B cell (primary cell): ENCODE measurements at regions of chrX and their contacts with region 1.

Region 1: DNA sequence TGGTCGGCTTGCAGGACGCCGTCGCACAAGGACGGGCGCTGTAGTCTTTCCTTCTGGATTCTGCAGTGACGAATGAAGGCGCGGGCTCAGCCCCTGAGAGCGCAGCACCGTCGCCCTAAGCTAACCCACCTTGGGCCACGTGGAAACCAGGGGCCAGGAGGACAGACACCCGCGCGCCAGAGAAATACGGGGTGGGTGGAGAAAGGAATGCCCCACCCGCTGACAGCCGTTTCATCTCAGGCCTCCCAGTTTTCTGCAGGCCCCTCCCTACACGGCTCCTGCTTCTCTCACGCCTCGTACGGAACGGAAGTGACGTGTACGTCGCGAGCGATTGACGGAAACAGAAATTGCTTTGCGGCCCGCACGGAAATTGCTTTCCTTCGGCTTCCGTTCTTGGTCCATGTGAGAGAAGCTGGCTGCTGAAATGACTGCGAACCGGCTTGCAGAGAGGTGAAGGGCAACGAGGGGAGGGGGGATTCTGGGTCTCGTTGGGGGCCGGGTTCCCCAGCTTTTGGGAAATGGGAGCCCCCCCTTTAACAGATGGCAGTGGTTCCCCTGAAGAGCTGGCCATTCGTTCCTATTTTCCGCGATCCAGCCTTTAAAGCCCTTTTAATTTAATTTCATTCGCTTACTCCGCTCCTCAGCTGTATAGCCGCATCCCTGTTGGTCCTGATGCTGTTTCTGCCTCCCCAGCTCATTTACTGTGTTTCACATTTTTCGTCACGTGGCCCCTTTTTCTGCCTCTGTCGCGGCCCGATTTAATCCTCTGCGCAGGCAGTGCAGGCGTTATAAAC is at the start of gene UTP14A:
- DNase-seq: peak; percentile 87
- ATAC-seq: peak; percentile 95
- H3K4me3 ChIP-seq: peak within 1 kb of the TSS; percentile 66 to 81 (median 76)
- H3K4me3 Mint-ChIP-seq: peak within 1 kb of the TSS; percentile 94
- H3K27ac ChIP-seq: peak within 1 kb of the TSS; percentile 53 to 69
- H3K27ac Mint-ChIP-seq: peak within 1 kb of the TSS; percentile 93
- H3K4me1 ChIP-seq: peaks cover 4 to 12% of the 10 kb centered on the region in 2 donors
- H3K4me1 Mint-ChIP-seq: peaks cover 9% of the 10 kb centered on the region
- H3K27me3 ChIP-seq: no peaks in the 10 kb centered on the region
- H3K27me3 Mint-ChIP-seq: no peaks in the 10 kb centered on the region
- CTCF ChIP-seq: no peak
- total RNA-seq, gene UTP14A: 21.5 and 23.0 TPM in 2 replicates

Region 2: DNA sequence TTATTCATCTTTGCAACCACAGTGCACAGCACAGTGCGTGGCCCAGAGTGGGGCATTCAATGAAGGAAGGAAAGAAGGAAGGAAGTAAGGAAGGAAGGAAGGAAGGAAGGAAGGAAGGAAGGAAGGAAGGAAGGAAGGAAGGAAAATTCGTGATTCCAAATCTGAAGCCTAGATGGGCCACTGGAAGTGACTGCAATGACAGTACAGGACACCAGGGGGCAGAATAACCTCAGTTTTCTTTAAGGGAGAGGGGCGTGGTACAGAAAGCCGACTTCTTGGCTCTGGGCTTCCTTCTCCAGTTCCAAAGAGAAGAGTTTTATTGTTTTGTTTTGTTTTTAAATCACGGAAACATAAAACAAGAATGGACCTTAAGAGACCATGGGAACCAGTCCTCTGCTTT is 299.1 kb before region 1 on chrX:
- CTCF ChIA-PET with region 1: no interaction called
- POLR2A ChIA-PET with region 1: no interaction called
- intact Hi-C with region 1: loop called (anchors 5 kb)
- DNase-seq: peak; percentile 68
- ATAC-seq: peak; percentile 63
- H3K4me3 ChIP-seq: no peak overlapping the region
- H3K4me3 Mint-ChIP-seq: no peak overlapping the region
- H3K27ac ChIP-seq: no peak overlapping the region
- H3K27ac Mint-ChIP-seq: no peak overlapping the region
- H3K4me1 ChIP-seq: peaks cover 12 to 15% of the 10 kb centered on the region in 2 donors
- H3K4me1 Mint-ChIP-seq: peaks cover 17% of the 10 kb centered on the region
- H3K27me3 ChIP-seq: no peaks in the 10 kb centered on the region
- H3K27me3 Mint-ChIP-seq: no peaks in the 10 kb centered on the region
- CTCF ChIP-seq: peak; percentile 72

Region 3: DNA sequence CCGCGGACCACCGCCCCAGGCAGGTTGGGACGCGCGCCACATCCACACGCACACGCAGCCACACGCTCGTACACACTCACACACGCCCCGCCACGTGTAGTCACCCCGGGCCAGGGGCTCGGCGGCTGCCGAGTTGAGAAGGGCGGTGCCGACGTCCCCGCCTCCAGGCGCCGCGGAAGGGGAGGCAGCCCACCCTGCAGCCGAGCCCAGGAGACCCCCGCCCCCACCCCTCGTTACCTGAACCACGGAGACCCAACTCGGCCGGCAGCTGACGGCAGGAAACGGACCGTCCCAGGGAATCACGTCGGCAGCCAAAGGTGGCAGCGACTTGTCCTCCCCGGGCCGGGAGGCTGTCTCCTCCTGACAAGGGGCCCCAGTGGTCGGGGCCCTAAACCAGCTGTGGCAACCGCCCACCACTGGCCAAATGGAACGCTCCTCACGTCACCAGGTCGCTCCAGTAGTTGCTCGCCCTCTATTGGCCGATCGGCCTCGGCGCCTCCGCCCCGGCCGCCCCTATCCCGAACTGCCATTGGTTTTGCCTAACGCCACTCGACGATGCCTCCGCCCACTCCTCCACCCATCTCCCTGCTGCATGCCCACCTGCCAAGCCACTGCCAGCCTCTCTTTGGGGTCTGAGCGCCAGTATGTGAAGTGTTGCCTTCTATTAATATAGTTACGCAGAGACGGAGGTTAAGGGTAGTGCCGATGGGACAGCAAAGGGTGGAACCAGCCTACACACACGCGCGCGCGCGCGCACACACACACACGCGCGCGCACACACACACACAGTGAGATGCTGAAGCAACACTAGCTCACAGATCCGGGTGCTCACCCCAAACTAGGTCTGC is 62.3 kb before region 1 on chrX and contains the start of gene ZDHHC9:
- CTCF ChIA-PET with region 1: no interaction called
- POLR2A ChIA-PET with region 1: no interaction called
- intact Hi-C with region 1: loop called (anchors 2 kb)
- DNase-seq: peak; percentile 89
- ATAC-seq: peak; percentile 99
- H3K4me3 ChIP-seq: peak within 1 kb of the TSS; percentile 8 to 75 (median 72)
- H3K4me3 Mint-ChIP-seq: peak within 1 kb of the TSS; percentile 94
- H3K27ac ChIP-seq: peak within 1 kb of the TSS in 1 of 2 donors; percentile 54
- H3K27ac Mint-ChIP-seq: peak within 1 kb of the TSS; percentile 87
- H3K4me1 ChIP-seq: peaks cover 4 to 11% of the 10 kb centered on the region in 2 donors
- H3K4me1 Mint-ChIP-seq: peaks cover 19% of the 10 kb centered on the region
- H3K27me3 ChIP-seq: peaks cover 0 to 3% (median 0%) of the 10 kb centered on the region in 4 experiments
- H3K27me3 Mint-ChIP-seq: no peaks in the 10 kb centered on the region
- CTCF ChIP-seq: no peak
- total RNA-seq, gene ZDHHC9: 4.5 and 6.1 TPM in 2 replicates

Region 4: GRCh38 chrX:129957241-129958082 is 51.5 kb after region 1 on chrX:
- CTCF ChIA-PET with region 1: no interaction called
- POLR2A ChIA-PET with region 1: interaction called, 4 read pairs
- intact Hi-C with region 1: loop called (anchors 1 kb)
- DNase-seq: peak; percentile 77
- ATAC-seq: peak; percentile 79
- H3K4me3 ChIP-seq: peak overlapping the region in 4 of 5 experiments; percentile 43 to 56 (median 51)
- H3K4me3 Mint-ChIP-seq: peak overlapping the region; percentile 78
- H3K27ac ChIP-seq: peak overlapping the region; percentile 33 to 67
- H3K27ac Mint-ChIP-seq: peak overlapping the region; percentile 78
- H3K4me1 ChIP-seq: peaks cover 13 to 40% of the 10 kb centered on the region in 2 donors
- H3K4me1 Mint-ChIP-seq: peaks cover 41% of the 10 kb centered on the region
- H3K27me3 ChIP-seq: no peaks in the 10 kb centered on the region
- H3K27me3 Mint-ChIP-seq: no peaks in the 10 kb centered on the region
- CTCF ChIP-seq: no peak

Region 5: GRCh38 chrX:130049821-130050220 is 143.8 kb after region 1 on chrX:
- CTCF ChIA-PET with region 1: no interaction called
- POLR2A ChIA-PET with region 1: no interaction called
- intact Hi-C with region 1: no loop called
- DNase-seq: no peak
- ATAC-seq: no peak
- H3K4me3 ChIP-seq: no peak overlapping the region
- H3K4me3 Mint-ChIP-seq: no peak overlapping the region
- H3K27ac ChIP-seq: no peak overlapping the region
- H3K27ac Mint-ChIP-seq: no peak overlapping the region
- H3K4me1 ChIP-seq: no peaks in the 10 kb centered on the region
- H3K4me1 Mint-ChIP-seq: no peaks in the 10 kb centered on the region
- H3K27me3 ChIP-seq: no peaks in the 10 kb centered on the region
- H3K27me3 Mint-ChIP-seq: no peaks in the 10 kb centered on the region
- CTCF ChIP-seq: no peak

Region 6: DNA sequence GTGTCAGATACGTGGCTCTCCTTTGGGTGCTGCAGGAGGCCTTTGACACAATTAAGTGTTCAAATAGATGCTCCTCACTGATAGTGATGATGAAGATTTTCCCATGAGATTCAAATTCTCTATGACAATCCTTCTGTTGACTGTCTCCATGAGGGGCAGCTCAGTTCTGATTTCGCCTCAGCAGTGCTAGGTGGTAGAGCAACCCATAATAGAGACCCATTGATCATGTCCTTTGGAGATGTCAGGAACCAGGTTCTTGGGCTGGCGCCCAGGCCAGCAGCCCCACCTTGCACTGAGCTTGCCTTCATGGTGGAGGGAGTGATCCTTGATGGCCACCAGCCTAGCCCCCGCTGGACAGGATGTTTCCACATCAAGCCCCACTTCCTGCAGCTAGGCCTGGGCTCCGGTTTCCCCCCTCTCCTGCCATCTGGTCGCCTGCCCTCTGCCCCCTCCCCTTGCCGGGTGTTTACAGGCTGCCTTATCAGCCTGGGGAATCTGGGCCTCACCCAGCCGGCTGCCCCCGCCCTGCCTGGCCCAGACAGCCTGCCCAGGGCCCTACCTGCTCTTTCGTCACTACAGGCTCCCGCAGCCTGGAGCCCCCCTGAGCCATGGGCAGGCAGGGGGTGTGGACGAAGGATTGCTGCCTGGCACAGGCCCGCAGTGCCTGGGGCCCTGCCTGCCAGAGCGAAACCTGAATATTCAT is 191.7 kb after region 1 on chrX:
- CTCF ChIA-PET with region 1: no interaction called
- POLR2A ChIA-PET with region 1: no interaction called
- intact Hi-C with region 1: no loop called
- DNase-seq: no peak
- ATAC-seq: no peak
- H3K4me3 ChIP-seq: no peak overlapping the region
- H3K4me3 Mint-ChIP-seq: no peak overlapping the region
- H3K27ac ChIP-seq: peak overlapping the region in 1 of 2 donors; percentile 48
- H3K27ac Mint-ChIP-seq: peak overlapping the region; percentile 42
- H3K4me1 ChIP-seq: peaks cover 19 to 38% of the 10 kb centered on the region in 2 donors
- H3K4me1 Mint-ChIP-seq: peaks cover 56% of the 10 kb centered on the region
- H3K27me3 ChIP-seq: no peaks in the 10 kb centered on the region
- H3K27me3 Mint-ChIP-seq: no peaks in the 10 kb centered on the region
- CTCF ChIP-seq: no peak